ENCODE measurements at regions of chr11 and their contacts with region 1.

Region 1: DNA sequence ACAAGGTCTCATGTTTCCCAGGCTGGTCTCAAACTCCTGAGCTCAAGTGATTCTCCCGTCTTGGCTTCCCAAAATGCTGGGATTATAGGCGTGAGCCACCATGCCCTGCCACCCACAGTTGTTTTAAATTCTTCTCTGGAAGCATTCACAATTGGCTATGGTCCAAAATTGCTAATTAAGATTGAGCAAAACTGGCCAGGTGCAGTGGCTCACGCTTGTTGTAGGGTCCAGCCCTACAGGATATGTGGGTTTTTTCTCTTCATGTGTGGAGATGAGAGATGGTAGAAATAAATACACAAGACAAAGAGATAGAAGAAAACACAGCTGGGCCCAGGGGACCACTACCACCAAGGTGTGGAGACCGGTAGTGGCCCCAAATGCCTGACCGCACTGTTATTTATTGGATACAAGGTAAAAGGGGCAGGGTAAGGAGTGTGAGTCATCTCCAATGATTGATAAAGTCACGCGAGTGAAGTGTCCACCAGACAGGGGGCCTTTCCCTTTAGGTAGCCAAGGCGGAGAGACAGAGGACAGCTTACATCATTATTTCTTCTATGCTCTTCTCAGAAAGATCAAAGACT is 8.3 kb upstream of the ACY3 start:
- DNase-seq: no peak
- ATAC-seq: no peak
- H3K4me3 ChIP-seq: no peak overlapping the region
- H3K27ac ChIP-seq: no peak overlapping the region
- H3K4me1 ChIP-seq: no peaks in the 10 kb centered on the region
- H3K27me3 ChIP-seq: no peaks in the 10 kb centered on the region
- CTCF ChIP-seq: no peak
- POLR2A ChIP-seq: no peak

Region 2: GRCh38 chr11:67572747-67573419 is 85.9 kb before region 1 on chr11:
- in situ Hi-C with region 1: loop called in 1 of 4 experiments (anchors 5 kb)
- intact Hi-C with region 1: loop called (anchors 2 kb)
- DNase-seq: peak; percentile 37 to 78
- ATAC-seq: peak; percentile 52 to 80
- H3K4me3 ChIP-seq: no peak overlapping the region
- H3K27ac ChIP-seq: peak overlapping the region in 2 of 4 donors; percentile 39 to 41
- H3K4me1 ChIP-seq: no peaks in the 10 kb centered on the region
- H3K27me3 ChIP-seq: no peaks in the 10 kb centered on the region
- CTCF ChIP-seq: peak; percentile 71 to 88 (median 76)
- POLR2A ChIP-seq: no peak

Region 3: GRCh38 chr11:67614732-67615714 is 43.8 kb before region 1 on chr11:
- in situ Hi-C with region 1: no loop called
- intact Hi-C with region 1: loop called (anchors 1 kb)
- DNase-seq: peak in 1 of 2 donors; percentile 35
- ATAC-seq: peak; percentile 9 to 67
- H3K4me3 ChIP-seq: peak overlapping the region in 1 of 4 donors; percentile 30
- H3K27ac ChIP-seq: no peak overlapping the region
- H3K4me1 ChIP-seq: peaks cover 0 to 8% of the 10 kb centered on the region in 2 donors
- H3K27me3 ChIP-seq: peaks cover 0 to 2% (median 0%) of the 10 kb centered on the region in 3 donors
- CTCF ChIP-seq: peak in 4 of 5 experiments; percentile 41 to 59 (median 52)
- POLR2A ChIP-seq: no peak

Region 4: DNA sequence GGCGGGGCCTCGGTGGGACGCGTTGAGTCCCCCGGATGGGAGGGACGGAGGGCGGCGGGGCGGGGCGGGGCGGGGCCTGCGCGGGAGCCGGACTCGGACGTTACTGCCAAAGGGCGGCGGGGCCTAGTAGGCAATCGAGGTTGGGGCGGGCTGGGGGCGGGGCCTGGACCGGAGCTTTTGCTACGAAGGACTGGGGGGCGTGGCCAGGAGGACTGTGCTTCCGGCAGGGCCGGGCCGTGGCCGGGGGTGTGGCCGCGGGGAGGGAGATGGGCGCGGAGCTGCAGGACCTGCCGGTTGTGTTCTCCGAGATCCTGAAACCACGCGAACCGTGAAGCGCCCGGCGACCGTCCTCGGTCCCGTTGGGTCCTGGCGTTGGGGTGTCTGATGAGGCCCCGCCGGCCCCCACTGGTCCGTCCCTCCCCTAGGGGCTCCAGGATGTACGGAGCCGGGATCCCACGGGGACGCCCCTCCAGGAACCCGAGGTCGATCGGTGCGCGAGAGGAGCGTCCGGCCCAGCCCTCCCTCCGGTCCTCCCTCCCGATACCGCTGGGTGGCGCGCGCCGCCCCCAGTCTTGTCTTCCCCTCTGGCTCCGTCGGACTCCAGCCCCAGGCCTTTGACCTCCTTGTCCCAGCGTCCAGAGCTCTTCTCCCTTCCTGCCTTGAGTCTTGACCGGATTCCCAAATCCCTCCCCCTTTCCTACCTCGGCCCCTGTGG is 28.4 kb before region 1 on chr11:
- in situ Hi-C with region 1: no loop called
- intact Hi-C with region 1: loop called (anchors 1 kb)
- DNase-seq: peak; percentile 97 to 98
- ATAC-seq: peak; percentile 81 to 84
- H3K4me3 ChIP-seq: peak overlapping the region; percentile 71 to 98 (median 82)
- H3K27ac ChIP-seq: peak overlapping the region; percentile 89 to 98 (median 92)
- H3K4me1 ChIP-seq: peaks cover 5% of the 10 kb centered on the region in 2 donors
- H3K27me3 ChIP-seq: no peaks in the 10 kb centered on the region
- CTCF ChIP-seq: peak; percentile 51 to 79 (median 71)
- POLR2A ChIP-seq: peak; percentile 54 to 56